Activated T-helper 1 cell treated with anti-CD3 and anti-CD28 coated beads, Interleukin-12 subunit alpha, Interleukin-12 subunit beta, Interleukin-2, Interleukin-4 antibody, amounts not matched to agents 30 ng/mL and 10 ng/mL and 1 ng/mL, durations not matched to agents 14 hours and 24 hours and 36 hours (primary cell): ENCODE measurements at regions of chr15 and their contacts with region 1.

Region 1: DNA sequence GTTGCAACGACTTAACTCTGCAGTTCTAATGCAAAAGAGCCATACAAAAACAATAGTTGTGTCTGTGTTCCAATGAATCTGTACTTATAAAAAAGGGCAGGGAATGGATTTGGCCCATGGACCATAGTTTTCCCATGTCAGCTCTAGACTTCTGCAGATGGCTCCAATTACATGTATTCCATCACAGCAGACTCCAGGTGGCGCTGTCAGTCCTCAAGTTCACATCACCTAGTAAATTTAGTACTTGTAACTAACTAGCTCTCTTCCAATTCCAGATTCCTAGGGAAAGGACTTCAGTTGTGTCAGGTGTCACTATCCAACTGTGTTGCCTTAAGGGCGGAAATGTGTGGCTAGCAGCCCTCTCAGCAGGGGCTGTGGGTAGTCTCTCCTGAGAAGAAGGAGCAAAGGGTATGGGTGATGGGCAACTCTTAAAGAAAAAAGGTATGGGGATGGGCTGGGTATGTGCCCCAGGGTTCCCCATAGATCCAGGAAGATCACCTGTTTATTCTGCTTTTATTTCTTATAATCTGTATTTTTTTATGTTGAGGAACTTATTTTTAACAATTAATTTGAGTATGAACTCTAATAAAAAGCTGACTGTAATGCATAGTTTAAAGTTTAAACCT is 36.2 kb downstream of the BBS4 start:
- DNase-seq: peak; percentile 44
- H3K4me3 Mint-ChIP-seq: no peak overlapping the region
- H3K27ac Mint-ChIP-seq: no peak overlapping the region
- H3K4me1 Mint-ChIP-seq: no peaks in the 10 kb centered on the region
- H3K27me3 Mint-ChIP-seq: no peaks in the 10 kb centered on the region

Region 2: DNA sequence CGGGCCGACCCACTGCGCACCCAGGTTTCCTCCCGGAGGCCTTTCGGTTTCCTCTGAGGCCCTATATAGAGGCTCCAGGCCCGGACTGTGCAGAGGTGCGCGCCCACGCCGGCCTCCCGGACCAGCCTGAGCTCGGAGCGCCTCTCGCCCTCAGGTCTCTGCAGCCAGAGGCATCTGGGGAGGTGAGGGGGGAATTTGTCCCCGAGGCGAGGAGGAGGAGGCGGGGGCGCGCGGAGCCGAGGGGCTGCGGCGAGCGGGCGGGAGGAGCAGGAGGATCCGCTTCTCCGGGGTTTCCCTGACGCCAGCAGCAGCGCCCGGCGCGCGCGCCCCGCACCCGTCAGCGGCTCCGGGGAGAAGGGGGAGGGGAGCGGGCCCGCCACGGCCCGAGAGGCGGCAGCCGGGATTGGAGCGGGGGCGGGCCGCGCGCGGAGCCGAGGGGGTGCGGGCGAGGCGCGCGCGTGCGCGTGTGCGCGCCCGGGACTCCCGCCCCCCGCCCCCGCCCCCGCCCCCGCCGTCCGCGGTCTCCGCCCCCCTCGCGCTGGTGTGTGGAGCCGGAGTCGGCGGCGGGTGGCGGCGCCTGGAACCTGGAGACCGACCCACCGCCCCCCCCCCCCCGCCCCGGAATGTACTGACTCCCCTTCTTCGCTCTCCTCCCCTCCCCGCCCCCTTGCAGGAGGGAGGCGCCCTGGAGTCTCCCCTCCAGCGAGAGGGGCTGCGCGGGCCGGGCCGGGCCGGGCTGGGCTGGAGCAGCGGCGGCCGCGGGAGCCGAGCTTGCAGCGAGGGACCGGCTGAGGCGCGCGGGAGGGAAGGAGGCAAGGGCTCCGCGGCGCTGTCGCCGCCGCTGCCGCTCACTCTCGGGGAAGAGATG is 329.9 kb after region 1 on chr15 and contains the start of gene NEO1:
- intact Hi-C with region 1: loop called (anchors 10 kb)
- DNase-seq: peak; percentile 74
- H3K4me3 Mint-ChIP-seq: peak within 1 kb of the TSS; percentile 82
- H3K27ac Mint-ChIP-seq: peak within 1 kb of the TSS; percentile 64
- H3K4me1 Mint-ChIP-seq: peaks cover 8% of the 10 kb centered on the region
- H3K27me3 Mint-ChIP-seq: peaks cover 27% of the 10 kb centered on the region
- total RNA-seq, gene NEO1: 5.6 and 9.1 TPM in 2 replicates

Region 3: GRCh38 chr15:73081321-73081958 is 359.3 kb after region 1 on chr15:
- intact Hi-C with region 1: loop called (anchors 1 kb)
- DNase-seq: no peak
- H3K4me3 Mint-ChIP-seq: no peak overlapping the region
- H3K27ac Mint-ChIP-seq: no peak overlapping the region
- H3K4me1 Mint-ChIP-seq: no peaks in the 10 kb centered on the region
- H3K27me3 Mint-ChIP-seq: peaks cover 2% of the 10 kb centered on the region

Region 4: GRCh38 chr15:73273181-73274002 is 551.2 kb after region 1 on chr15:
- intact Hi-C with region 1: loop called (anchors 1 kb)
- DNase-seq: peak; percentile 19
- H3K4me3 Mint-ChIP-seq: no peak overlapping the region
- H3K27ac Mint-ChIP-seq: no peak overlapping the region
- H3K4me1 Mint-ChIP-seq: peaks cover 6% of the 10 kb centered on the region
- H3K27me3 Mint-ChIP-seq: no peaks in the 10 kb centered on the region